ENCODE measurements at regions of chr17 and their contacts with region 1.

Region 1: DNA sequence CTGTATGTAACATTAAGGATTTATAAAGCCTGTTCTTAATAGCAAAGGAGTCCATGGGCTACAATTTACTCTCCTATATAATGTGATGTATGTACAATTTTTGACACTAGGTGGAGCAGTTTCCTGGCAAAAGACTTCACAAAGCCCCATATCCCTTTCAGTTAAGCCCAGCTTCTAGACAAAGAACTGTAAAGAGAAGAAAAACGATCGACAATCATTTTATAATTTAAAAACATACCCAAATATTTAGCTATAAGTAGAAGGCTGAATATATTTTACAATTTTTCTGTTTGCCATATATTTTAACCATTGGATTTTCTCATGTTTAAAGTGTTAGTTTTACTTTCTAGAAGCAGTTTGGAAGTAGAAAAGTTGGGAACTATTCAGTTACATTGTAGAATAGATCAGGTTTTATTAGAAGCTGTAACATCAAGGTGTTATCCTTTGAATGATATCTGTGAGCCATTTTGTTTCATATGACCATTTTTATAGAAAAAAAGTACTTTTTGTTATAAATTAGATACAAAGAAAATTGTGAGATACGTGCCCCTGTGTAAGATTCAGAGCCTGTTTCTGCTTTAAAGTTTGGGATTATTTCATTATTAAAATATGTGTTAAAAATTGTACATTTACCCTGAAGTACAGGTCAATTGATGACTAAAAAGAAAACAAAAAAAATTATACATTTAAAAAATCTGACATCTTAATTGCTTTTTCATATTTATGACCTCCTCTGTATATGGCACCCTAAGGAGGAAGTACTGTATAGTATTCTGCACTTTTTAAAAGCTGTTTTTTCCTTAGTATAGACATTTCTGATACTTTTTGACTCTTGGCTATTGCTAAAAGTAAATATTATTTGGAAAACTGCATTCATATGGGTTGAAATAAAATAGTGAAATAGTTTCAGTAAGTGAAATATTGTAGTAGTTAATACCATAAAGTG is 46.3 kb downstream of the VMP1 start:
- DNase-seq: peak; percentile 42 to 79 (median 77)
- H3K4me3 ChIP-seq: no peak overlapping the region
- H3K4me3 Mint-ChIP-seq: peak overlapping the region; percentile 46 to 83 (median 71)
- H3K27ac ChIP-seq: peak overlapping the region; percentile 43
- H3K27ac Mint-ChIP-seq: peak overlapping the region; percentile 51 to 89 (median 81)
- H3K4me1 ChIP-seq: peaks cover 28% of the 10 kb centered on the region
- H3K4me1 Mint-ChIP-seq: peaks cover 22 to 38% (median 27%) of the 10 kb centered on the region in 4 donors
- H3K27me3 ChIP-seq: no peaks in the 10 kb centered on the region
- H3K27me3 Mint-ChIP-seq: no peaks in the 10 kb centered on the region

Region 2: GRCh38 chr17:59778996-59779395 is 25.2 kb after region 1 on chr17:
- CTCF ChIA-PET with region 1: interaction called, 75 read pairs
- POLR2A ChIA-PET with region 1: interaction called, 24 read pairs
- intact Hi-C with region 1: no loop called
- DNase-seq: no peak
- H3K4me3 ChIP-seq: no peak overlapping the region
- H3K4me3 Mint-ChIP-seq: peak overlapping the region in 2 of 8 donors; percentile 4 to 10
- H3K27ac ChIP-seq: no peak overlapping the region
- H3K27ac Mint-ChIP-seq: peak overlapping the region; percentile 30 to 88 (median 76)
- H3K4me1 ChIP-seq: peaks cover 33% of the 10 kb centered on the region
- H3K4me1 Mint-ChIP-seq: peaks cover 24 to 37% (median 29%) of the 10 kb centered on the region in 4 donors
- H3K27me3 ChIP-seq: no peaks in the 10 kb centered on the region
- H3K27me3 Mint-ChIP-seq: no peaks in the 10 kb centered on the region

Region 3: GRCh38 chr17:59807892-59808509 is 54.2 kb after region 1 on chr17:
- CTCF ChIA-PET with region 1: interaction called, 12 read pairs
- POLR2A ChIA-PET with region 1: interaction called, 3 read pairs
- intact Hi-C with region 1: no loop called
- DNase-seq: no peak
- H3K4me3 ChIP-seq: no peak overlapping the region
- H3K4me3 Mint-ChIP-seq: no peak overlapping the region
- H3K27ac ChIP-seq: no peak overlapping the region
- H3K27ac Mint-ChIP-seq: peak overlapping the region in 2 of 7 donors; percentile 60 to 61
- H3K4me1 ChIP-seq: no peaks in the 10 kb centered on the region
- H3K4me1 Mint-ChIP-seq: peaks cover 5 to 7% (median 7%) of the 10 kb centered on the region in 4 donors
- H3K27me3 ChIP-seq: no peaks in the 10 kb centered on the region
- H3K27me3 Mint-ChIP-seq: no peaks in the 10 kb centered on the region

Region 4: DNA sequence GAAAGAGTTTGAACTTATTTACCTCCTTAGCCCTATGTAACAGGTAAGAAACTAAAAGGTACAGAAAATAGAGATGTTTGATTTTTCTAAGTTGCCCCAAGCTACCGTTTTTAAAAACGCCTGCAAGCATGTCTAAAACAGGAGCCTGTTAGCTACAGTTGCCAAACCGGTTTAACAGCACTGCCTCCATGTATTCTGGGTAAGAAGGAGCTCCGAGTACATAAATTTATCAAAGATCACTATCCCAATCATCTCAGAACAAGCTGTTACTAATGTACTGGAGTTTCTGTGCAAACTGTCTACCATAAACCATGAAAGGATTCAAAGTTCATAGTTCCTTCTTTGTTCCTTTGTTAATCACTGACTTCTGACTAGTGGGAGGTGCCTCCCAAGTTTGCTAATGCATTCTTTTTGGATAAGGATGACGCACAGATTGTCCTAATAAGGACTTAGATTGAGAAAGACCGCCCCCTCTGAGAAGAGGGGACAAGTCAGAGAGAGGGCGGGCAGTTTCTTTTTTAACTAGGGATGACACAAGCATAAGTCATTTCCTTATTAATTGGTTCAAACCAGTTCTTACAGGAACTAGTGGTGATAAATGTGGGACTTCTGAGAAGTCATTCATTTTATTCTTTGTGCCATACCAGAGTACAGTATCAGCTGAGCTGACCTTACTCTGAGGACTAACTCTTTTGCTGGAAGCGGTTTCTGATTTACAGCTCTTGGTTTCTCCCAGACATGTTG is 83.7 kb after region 1 on chr17:
- CTCF ChIA-PET with region 1: interaction called, 132 read pairs
- POLR2A ChIA-PET with region 1: interaction called, 87 read pairs
- intact Hi-C with region 1: loop called (anchors 1 kb)
- DNase-seq: peak; percentile 84 to 95 (median 91)
- H3K4me3 ChIP-seq: peak overlapping the region; percentile 78 to 94
- H3K4me3 Mint-ChIP-seq: peak overlapping the region; percentile 94 to 100 (median 97)
- H3K27ac ChIP-seq: peak overlapping the region; percentile 93
- H3K27ac Mint-ChIP-seq: peak overlapping the region; percentile 96 to 99 (median 98)
- H3K4me1 ChIP-seq: peaks cover 19% of the 10 kb centered on the region
- H3K4me1 Mint-ChIP-seq: peaks cover 23 to 59% (median 35%) of the 10 kb centered on the region in 4 donors
- H3K27me3 ChIP-seq: no peaks in the 10 kb centered on the region
- H3K27me3 Mint-ChIP-seq: no peaks in the 10 kb centered on the region

Region 5: GRCh38 chr17:59853168-59853918 is 99.5 kb after region 1 on chr17:
- CTCF ChIA-PET with region 1: interaction called, 5 read pairs
- POLR2A ChIA-PET with region 1: interaction called, 30 read pairs
- intact Hi-C with region 1: no loop called
- DNase-seq: peak; percentile 63 to 79 (median 69)
- H3K4me3 ChIP-seq: no peak overlapping the region
- H3K4me3 Mint-ChIP-seq: peak overlapping the region in 6 of 8 donors; percentile 1 to 75 (median 29)
- H3K27ac ChIP-seq: no peak overlapping the region
- H3K27ac Mint-ChIP-seq: peak overlapping the region; percentile 35 to 93 (median 71)
- H3K4me1 ChIP-seq: peaks cover 43% of the 10 kb centered on the region
- H3K4me1 Mint-ChIP-seq: peaks cover 23 to 35% (median 30%) of the 10 kb centered on the region in 4 donors
- H3K27me3 ChIP-seq: no peaks in the 10 kb centered on the region
- H3K27me3 Mint-ChIP-seq: no peaks in the 10 kb centered on the region

Region 6: GRCh38 chr17:59892924-59893676 is 139.3 kb after region 1 on chr17 and contains the starts of genes RPS6KB1 and TUBD1:
- CTCF ChIA-PET with region 1: interaction called, 13 read pairs
- POLR2A ChIA-PET with region 1: interaction called, 18 read pairs
- intact Hi-C with region 1: loop called (anchors 1 kb)
- DNase-seq: peak; percentile 96 to 99 (median 98)
- H3K4me3 ChIP-seq: peak within 1 kb of the TSS; percentile 68 to 83
- H3K4me3 Mint-ChIP-seq: peak within 1 kb of the TSS; percentile 99 to 100 (median 100)
- H3K27ac ChIP-seq: peak within 1 kb of the TSS; percentile 96
- H3K27ac Mint-ChIP-seq: peak within 1 kb of the TSS; percentile 93 to 100 (median 99)
- H3K4me1 ChIP-seq: peaks cover 51% of the 10 kb centered on the region
- H3K4me1 Mint-ChIP-seq: peaks cover 35 to 67% (median 50%) of the 10 kb centered on the region in 4 donors
- H3K27me3 ChIP-seq: no peaks in the 10 kb centered on the region
- H3K27me3 Mint-ChIP-seq: no peaks in the 10 kb centered on the region
- total RNA-seq, gene RPS6KB1: 57.2 to 67.4 TPM
- total RNA-seq, gene TUBD1: 42.4 to 44.0 TPM

Region 7: DNA sequence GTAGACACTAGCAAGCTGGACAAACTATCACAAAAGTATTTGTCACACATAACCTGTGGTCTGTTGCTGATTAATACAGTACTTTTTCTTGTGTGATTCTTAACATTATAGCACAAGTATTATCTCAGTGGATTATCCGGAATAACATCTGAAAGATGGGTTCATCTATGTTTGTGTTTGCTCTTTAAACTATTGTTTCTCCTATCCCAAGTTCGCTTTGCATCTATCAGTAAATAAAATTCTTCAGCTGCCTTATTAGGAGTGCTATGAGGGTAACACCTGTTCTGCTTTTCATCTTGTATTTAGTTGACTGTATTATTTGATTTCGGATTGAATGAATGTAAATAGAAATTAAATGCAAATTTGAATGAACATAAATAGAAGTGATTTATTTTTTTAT is 196.3 kb after region 1 on chr17:
- CTCF ChIA-PET with region 1: no interaction called
- POLR2A ChIA-PET with region 1: no interaction called
- intact Hi-C with region 1: no loop called
- DNase-seq: no peak
- H3K4me3 ChIP-seq: no peak overlapping the region
- H3K4me3 Mint-ChIP-seq: no peak overlapping the region
- H3K27ac ChIP-seq: no peak overlapping the region
- H3K27ac Mint-ChIP-seq: peak overlapping the region in 1 of 7 donors; percentile 22
- H3K4me1 ChIP-seq: no peaks in the 10 kb centered on the region
- H3K4me1 Mint-ChIP-seq: peaks cover 3 to 13% (median 4%) of the 10 kb centered on the region in 4 donors
- H3K27me3 ChIP-seq: no peaks in the 10 kb centered on the region
- H3K27me3 Mint-ChIP-seq: no peaks in the 10 kb centered on the region

Region 8: GRCh38 chr17:60036796-60037612 is 283.2 kb after region 1 on chr17:
- CTCF ChIA-PET with region 1: interaction called, 76 read pairs
- POLR2A ChIA-PET with region 1: interaction called, 4 read pairs
- intact Hi-C with region 1: loop called (anchors 5 kb)
- DNase-seq: peak; percentile 63 to 69 (median 67)
- H3K4me3 ChIP-seq: no peak overlapping the region
- H3K4me3 Mint-ChIP-seq: no peak overlapping the region
- H3K27ac ChIP-seq: no peak overlapping the region
- H3K27ac Mint-ChIP-seq: peak overlapping the region in 2 of 7 donors; percentile 13 to 53
- H3K4me1 ChIP-seq: no peaks in the 10 kb centered on the region
- H3K4me1 Mint-ChIP-seq: peaks cover 5% of the 10 kb centered on the region in 4 donors
- H3K27me3 ChIP-seq: peaks cover 4% of the 10 kb centered on the region
- H3K27me3 Mint-ChIP-seq: peaks cover 10 to 12% of the 10 kb centered on the region in 2 donors

Measured in CD4-positive, alpha-beta memory T cell (primary cell).